IMR-90 (cell line): ENCODE measurements at regions of chr7 and their contacts with region 1.

Region 1: GRCh38 chr7:135486261-135486920 is 23.5 kb downstream of the CNOT4 start:
- DNase-seq: peak; percentile 33
- ATAC-seq: peak; percentile 49
- H3K4me3 ChIP-seq: no peak overlapping the region
- H3K27ac ChIP-seq: no peak overlapping the region
- H3K4me1 ChIP-seq: peaks cover 6% of the 10 kb centered on the region
- H3K27me3 ChIP-seq: no peaks in the 10 kb centered on the region
- CTCF ChIP-seq: no peak
- POLR2A ChIP-seq: no peak
- RAD21 ChIP-seq: no peak

Region 2: DNA sequence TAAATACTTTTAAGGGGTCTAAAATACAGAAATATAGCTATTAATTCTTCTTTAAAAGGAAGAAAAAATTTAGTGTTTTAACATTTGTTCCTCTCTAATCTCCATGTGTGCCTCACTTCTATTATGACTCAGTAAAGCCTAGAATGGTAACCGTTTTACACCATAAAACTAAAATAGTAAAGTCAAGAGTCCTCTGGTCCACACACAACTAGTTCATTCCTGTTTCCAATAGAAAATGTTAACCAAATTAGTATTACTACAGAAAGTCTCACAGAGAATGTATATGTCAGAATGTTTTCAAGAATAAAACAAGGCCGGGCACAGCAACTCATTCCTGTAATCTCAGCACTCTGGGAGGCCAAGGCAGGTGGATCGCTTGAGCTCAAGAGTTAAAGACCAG is 32.3 kb before region 1 on chr7:
- CTCF ChIA-PET with region 1: interaction called, 4 read pairs
- POLR2A ChIA-PET with region 1: no interaction called
- dilution Hi-C with region 1: no loop called
- in situ Hi-C with region 1: no loop called
- intact Hi-C with region 1: loop called (anchors 5 kb)
- DNase-seq: no peak
- ATAC-seq: no peak
- H3K4me3 ChIP-seq: no peak overlapping the region
- H3K27ac ChIP-seq: no peak overlapping the region
- H3K4me1 ChIP-seq: peaks cover 3% of the 10 kb centered on the region; the same call in 1 of the 2 replicates
- H3K27me3 ChIP-seq: no peaks in the 10 kb centered on the region
- CTCF ChIP-seq: no peak
- POLR2A ChIP-seq: no peak
- RAD21 ChIP-seq: no peak